Mucosa of descending colon (tissue), 3 donors: ENCODE measurements at regions of chr1 and their contacts with region 1.

Region 1: DNA sequence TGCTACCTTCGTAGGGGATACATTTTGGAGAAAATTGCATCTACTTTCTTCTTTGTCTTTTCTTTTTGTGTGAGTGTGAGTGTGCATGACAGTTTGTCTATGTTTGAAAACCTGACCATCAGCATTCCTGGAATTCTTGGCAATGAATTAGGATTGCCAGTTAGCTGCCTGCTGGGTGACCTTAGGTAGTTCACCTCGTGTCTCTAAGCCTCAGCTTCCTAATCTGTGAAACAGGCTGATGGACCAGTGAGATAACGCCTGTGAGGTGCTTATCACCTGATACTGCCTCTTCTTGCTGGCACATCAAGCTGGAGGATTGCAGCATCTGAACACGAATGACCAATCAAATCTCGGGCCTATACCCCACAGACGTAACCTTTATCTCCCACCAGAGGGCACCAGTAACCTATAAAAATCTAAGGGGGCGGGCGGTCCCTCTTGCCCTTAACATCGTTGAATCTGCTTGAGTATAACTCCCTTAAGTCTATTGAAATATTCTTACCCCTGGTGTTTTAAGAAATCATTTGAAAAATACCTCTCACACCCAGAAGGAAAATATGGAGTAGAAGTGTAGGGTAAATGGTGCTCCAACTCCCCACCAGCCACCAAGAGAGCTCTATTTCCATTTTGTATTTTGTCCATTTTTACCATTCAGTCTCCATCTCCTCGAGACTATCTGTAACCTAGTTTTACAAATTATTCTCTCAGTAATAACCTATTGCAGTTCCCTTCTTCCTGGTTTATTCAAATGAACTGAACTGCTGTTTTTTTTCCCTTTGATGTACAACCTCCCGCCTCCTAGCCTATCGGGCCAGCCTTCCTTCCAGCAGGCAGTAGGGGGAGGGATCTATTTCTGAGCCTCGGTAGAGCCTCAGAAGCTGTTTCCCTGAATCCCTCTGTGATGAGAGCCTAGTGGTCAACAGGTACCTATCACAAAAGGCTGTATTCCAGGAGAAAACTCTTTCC is 49.7 kb downstream of the MDM4 start:
- DNase-seq: peak in 1 of 3 donors; percentile 61
- ATAC-seq: peak; percentile 79
- H3K4me3 ChIP-seq: no peak overlapping the region
- H3K4me1 ChIP-seq: peaks cover 5% of the 10 kb centered on the region
- CTCF ChIP-seq: peak; percentile 29

Region 2: DNA sequence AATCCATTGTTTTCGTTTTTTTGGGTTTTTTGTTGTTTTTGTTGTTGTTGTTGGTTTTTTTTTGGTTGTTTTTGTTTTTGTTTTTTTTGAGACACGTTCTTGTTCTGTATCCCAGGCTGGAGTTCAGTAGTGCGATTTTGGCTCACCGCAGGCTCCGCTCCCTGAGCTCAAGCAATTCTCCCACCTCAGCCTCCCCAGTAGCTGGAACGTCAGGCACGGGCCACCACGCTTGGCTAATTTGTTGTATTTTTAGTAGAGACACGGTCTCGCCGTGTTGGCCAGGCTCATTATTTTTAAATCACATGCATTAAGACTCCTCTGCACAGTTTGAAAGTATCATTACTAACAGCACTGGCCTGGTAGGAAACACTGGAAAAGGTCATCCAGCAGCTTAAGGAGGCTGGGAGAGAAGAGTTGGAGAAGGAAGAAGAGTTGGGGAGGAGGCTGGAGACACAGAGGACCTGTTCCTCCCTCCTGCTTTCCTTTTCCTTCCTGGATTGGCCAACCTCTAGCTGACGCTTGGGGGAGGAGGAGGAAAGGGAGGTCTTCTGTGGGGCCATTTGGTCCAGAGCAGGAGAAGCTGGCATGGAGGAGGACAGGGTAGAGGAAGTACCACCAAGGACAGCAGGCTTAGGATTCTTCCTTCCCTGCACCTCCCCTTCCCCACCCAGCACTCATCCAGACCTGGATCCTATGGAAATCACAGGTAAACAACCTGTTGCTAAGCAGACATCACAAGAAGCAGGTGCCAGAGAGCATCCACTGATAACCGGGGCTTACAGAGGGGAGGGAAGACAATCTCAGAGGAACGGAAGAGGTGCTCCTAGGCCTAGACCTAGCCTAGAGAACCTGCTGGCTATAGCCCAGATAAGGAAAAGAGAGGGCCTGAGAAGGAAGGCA is 280.2 kb before region 1 on chr1:
- intact Hi-C with region 1: no loop called
- DNase-seq: no peak
- ATAC-seq: peak; percentile 46
- H3K4me3 ChIP-seq: no peak overlapping the region
- H3K4me1 ChIP-seq: peaks cover 30% of the 10 kb centered on the region
- CTCF ChIP-seq: no peak

Region 3: GRCh38 chr1:204411451-204412204 is 154.3 kb before region 1 on chr1 and contains the start of gene PPP1R15B:
- intact Hi-C with region 1: no loop called
- DNase-seq: peak; percentile 97 to 99 (median 98)
- ATAC-seq: peak; percentile 92
- H3K4me3 ChIP-seq: peak within 1 kb of the TSS; percentile 95
- H3K4me1 ChIP-seq: peaks cover 4% of the 10 kb centered on the region
- CTCF ChIP-seq: peak; percentile 25
- total RNA-seq, gene PPP1R15B: 56.7 to 60.2 (median 60.1) TPM

Region 4: GRCh38 chr1:204763706-204764427 is 198.0 kb after region 1 on chr1:
- intact Hi-C with region 1: loop called (anchors 5 kb)
- DNase-seq: peak; percentile 72 to 84 (median 80)
- ATAC-seq: peak; percentile 97
- H3K4me3 ChIP-seq: no peak overlapping the region
- H3K4me1 ChIP-seq: no peaks in the 10 kb centered on the region
- CTCF ChIP-seq: peak; percentile 89

Region 5: GRCh38 chr1:204806943-204807687 is 241.2 kb after region 1 on chr1:
- intact Hi-C with region 1: loop called (anchors 5 kb)
- DNase-seq: peak; percentile 80 to 89 (median 87)
- ATAC-seq: peak; percentile 95
- H3K4me3 ChIP-seq: no peak overlapping the region
- H3K4me1 ChIP-seq: peaks cover 10% of the 10 kb centered on the region
- CTCF ChIP-seq: peak; percentile 96